Right ventricle myocardium superior (tissue), 1 donor: ENCODE measurements at regions of chr4 and their contacts with region 1.

Region 1: DNA sequence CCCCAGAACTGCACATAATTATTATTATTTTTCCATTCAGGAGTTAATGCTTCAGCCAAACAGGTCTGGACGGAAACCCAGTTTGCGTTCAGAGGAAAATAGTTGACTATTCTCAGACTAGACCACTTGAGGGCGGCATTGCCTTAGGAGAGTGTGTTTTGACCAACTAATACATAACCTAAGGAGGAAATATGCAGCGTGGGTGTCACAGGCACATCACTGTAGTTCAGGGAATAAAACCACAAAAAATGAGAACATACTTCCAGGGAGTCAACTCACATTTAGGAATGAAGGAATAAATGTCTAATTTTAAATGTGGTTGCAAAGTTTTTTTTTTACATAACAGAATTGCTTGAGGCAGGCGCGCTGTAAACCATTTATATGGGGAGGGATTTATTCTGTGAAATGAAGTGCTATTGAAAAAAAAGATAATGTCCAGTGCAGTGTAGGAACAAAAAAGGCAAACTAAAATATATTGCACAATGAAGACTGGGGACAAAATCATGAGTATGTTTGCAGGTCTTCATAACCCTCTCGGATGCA is 93.3 kb downstream of the SYNPO2 start:
- DNase-seq: no peak
- ATAC-seq: peak; percentile 78

Region 2: DNA sequence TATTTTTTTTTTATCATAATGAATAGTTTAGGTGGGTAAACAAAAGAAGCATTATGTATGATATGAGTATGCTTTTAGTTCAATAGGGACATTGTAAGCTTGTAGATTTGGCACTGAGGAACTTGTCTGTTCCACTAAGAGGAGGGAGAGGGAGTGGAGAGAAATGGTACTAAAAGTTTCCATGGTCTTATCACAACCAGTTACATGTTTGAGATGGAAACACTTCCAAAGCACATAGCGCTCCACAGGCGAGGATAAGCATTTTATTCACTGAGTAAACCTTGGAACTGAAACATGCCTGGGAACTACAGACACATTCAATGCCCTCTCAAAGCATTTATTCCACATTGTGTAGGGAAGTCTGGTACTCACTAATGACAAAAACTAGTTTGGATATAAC is 169.3 kb after region 1 on chr4:
- intact Hi-C with region 1: loop called (anchors 10 kb)
- DNase-seq: no peak
- ATAC-seq: peak; percentile 87

Region 3: GRCh38 chr4:119286377-119287002 is 304.6 kb after region 1 on chr4:
- intact Hi-C with region 1: loop called (anchors 5 kb)
- DNase-seq: no peak
- ATAC-seq: peak; percentile 77